Panc1 (cell line): ENCODE measurements at regions of chr12 and their contacts with region 1.

Region 1: GRCh38 chr12:55670276-55670675 is 33.6 kb downstream of the OR10P1 start:
- DNase-seq: no peak
- ATAC-seq: no peak
- H3K4me3 ChIP-seq: no peak overlapping the region
- H3K27ac ChIP-seq: no peak overlapping the region
- H3K4me1 ChIP-seq: no peaks in the 10 kb centered on the region
- H3K27me3 ChIP-seq: 0 out of 2 replicates have a peak, but pooled peaks cover 3% of the 10 kb centered on the region
- CTCF ChIP-seq: no peak

Region 2: DNA sequence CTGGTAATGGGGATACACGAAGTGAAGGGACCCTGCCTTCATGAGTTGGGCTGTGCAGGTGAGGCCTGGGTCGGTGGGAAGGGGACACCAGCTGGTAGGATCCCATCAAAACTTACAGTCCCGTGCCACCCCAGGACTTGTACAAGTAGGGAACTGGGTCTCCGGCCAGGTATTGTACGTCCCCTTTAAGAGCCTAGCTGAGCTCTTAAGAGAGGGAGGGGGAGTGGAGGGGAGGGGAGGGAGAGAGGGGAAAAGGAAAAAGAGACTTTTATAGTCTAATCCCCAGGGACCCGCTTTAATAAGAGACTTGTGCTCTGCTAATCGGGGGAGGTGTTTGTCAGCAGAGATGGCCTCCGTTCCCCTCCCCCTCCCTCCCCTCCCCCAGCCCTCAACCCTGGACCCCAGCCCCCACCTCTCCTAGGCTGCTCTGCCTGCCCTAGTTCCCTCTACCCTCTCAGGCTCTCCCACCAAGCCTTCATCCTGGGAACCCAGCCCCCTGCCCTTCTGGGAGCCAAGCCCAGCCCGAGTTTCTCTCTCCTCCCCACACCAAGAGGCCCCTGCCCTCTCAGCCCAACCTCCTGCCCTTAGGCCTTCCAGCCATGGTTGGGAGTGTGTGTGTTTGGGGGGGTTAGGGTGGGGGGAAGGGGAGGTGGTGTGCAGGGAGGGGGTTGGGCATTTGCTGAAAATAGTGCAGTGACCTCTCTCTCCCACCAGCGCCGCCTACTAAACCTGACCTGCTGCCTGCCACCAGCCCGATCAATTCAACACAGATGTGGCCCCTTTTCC is 75.3 kb after region 1 on chr12:
- CTCF ChIA-PET with region 1: interaction called, 19 read pairs
- POLR2A ChIA-PET with region 1: no interaction called
- in situ Hi-C with region 1: no loop called
- intact Hi-C with region 1: no loop called
- DNase-seq: no peak
- ATAC-seq: no peak
- H3K4me3 ChIP-seq: no peak overlapping the region
- H3K27ac ChIP-seq: no peak overlapping the region
- H3K4me1 ChIP-seq: peaks cover 24% of the 10 kb centered on the region
- H3K27me3 ChIP-seq: no peaks in the 10 kb centered on the region
- CTCF ChIP-seq: no peak